Right ventricle myocardium inferior (tissue), 1 donor: ENCODE measurements at regions of chr4 and their contacts with region 1.

Region 1: DNA sequence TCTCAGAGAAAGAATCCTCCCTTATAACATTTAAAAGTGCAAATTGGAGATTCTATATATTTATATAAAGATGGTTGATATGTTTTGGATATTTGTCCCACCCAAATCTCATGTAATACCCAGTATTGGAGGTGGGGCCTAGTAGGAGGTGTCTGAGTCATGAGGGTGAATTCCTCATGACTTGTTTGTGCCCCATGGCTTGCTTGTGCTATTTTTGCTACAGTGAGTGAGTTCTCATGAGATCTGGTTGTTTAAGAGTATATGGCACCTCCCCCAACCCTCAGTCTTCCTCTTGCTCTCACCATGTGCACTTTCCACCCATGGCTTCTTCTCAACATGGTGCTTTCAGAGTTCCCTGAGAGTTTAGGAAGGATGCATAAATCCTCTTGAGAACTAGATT is 9.5 kb upstream of the ANKRD50 start:
- DNase-seq: no peak
- ATAC-seq: no peak

Region 2: DNA sequence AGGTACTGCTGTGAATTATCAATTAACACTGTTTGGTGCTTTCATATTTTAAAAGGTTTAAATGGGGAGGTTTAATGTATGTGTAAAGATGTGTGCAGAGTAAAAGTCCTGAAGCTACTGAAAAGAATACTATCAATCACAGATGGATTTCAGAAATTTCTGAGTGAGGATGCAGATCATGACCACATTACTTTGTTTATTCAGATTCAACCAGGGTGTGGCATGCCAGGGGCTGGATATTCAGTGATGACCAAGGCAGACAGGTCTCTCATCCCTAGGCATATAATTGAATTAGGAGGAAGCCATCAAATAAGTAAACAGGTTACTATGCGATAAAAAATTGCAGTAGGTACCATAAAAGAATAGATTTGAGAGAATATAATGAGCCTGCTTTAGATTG is 18.4 kb after region 1 on chr4:
- intact Hi-C with region 1: loop called (anchors 2 kb)
- DNase-seq: no peak
- ATAC-seq: no peak

Region 3: GRCh38 chr4:124768596-124769365 is 46.7 kb after region 1 on chr4:
- intact Hi-C with region 1: no loop called
- DNase-seq: no peak
- ATAC-seq: no peak

Region 4: GRCh38 chr4:124953061-124953460 is 231.0 kb after region 1 on chr4:
- intact Hi-C with region 1: no loop called
- DNase-seq: no peak
- ATAC-seq: no peak